Sciatic nerve (tissue), 2 donors: ENCODE measurements at regions of chr5 and their contacts with region 1.

Region 1: GRCh38 chr5:169861934-169862333 is 118.4 kb downstream of the INSYN2B start:
- DNase-seq: no peak
- ATAC-seq: no peak

Region 2: GRCh38 chr5:169826618-169827017 is 35.3 kb before region 1 on chr5:
- intact Hi-C with region 1: no loop called
- DNase-seq: no peak
- ATAC-seq: no peak

Region 3: GRCh38 chr5:171701100-171701541 is 1839.2 kb after region 1 on chr5:
- intact Hi-C with region 1: loop called (anchors 10 kb)
- DNase-seq: no peak
- ATAC-seq: no peak